Posterior vena cava (tissue), 2 donors: ENCODE measurements at regions of chr14 and their contacts with region 1.

Region 1: DNA sequence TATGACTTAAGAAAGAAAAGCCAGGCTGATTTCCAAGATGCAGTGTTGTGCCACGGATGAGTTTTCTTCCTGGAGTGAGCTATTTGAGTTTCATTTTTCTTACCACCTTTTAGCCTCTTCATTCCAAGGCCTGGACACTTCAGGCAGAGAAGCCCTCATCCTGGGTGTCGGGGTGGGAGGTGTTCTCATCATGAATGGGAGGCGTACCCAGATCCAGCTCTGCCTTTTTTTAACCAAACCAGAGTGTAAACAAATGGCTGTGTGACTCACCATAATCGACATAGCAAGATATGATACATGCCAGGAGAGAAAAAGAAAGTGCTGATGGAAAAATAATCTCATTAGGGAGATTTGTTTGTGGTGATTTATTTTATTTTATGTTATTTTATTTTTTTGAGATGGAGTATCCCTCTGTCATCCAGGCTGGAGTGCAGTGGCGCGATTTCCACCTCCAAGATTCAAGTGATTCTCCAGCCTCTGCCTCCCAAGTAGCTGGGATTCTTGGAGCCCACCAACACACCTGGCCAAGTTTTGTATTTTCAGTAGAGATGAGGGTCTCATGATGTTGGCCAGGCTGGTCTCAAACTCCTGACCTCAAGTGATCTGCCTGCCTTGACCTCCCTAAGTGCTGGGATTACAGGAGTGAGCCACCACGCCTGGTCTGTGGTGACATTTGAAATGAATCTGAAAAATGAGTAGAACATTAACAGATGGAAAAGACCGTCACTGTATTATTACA is 80.1 kb downstream of the ARF6 start:
- DNase-seq: no peak

Region 2: GRCh38 chr14:50018933-50019210 is 45.9 kb after region 1 on chr14:
- intact Hi-C with region 1: loop called in 1 of 2 experiments (anchors 1 kb)
- DNase-seq: no peak